ENCODE measurements at regions of chr14 and their contacts with region 1.

Region 1: GRCh38 chr14:22556990-22557623 is 31.9 kb downstream of the DAD1 start:
- DNase-seq: peak; percentile 94
- H3K4me3 Mint-ChIP-seq: peak overlapping the region; percentile 78
- H3K27ac Mint-ChIP-seq: peak overlapping the region; percentile 99
- H3K4me1 Mint-ChIP-seq: peaks cover 87% of the 10 kb centered on the region
- H3K27me3 Mint-ChIP-seq: peaks cover 4% of the 10 kb centered on the region

Region 2: DNA sequence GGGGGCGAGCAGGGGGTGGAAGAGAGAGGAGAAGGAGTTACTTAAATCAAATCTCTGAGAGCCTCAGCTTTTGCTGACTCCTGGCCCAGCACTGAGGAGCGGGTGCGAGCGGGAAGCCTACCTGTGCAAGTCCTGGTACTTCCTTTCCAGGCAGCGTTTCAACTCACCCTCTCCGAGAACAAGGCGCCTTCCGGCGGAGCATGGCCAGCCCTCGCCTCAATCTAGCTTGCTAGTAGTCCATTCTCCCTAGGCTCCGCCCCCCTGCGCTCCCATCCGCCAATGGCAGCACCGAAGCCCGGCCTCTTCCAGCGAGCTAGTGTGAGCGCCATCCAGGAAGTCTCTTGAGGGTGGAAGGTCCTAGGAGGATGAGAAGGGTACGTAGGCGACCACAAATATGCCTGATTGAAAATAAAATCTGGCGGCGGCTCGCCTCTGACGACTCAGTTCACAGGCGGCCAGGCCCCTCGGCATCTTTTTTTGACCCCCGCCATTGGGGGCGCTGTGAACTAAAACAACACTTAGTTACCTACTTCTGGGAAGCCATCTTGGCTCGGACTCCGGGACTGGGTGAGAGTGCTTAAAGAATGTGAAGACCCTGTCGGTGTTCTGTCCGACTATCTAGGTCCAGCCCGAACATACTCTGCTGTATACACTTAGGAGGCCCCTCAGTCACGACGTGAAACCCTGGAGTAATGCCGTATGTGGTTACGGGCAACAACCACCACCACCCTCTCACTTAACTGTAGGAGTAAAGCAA is 1101.0 kb before region 1 on chr14 and contains the start of gene CHD8:
- CTCF ChIA-PET with region 1: no interaction called
- POLR2A ChIA-PET with region 1: no interaction called
- intact Hi-C with region 1: loop called (anchors 10 kb)
- DNase-seq: peak; percentile 100
- H3K4me3 Mint-ChIP-seq: peak within 1 kb of the TSS; percentile 91
- H3K27ac Mint-ChIP-seq: peak within 1 kb of the TSS; percentile 98
- H3K4me1 Mint-ChIP-seq: peaks cover 31% of the 10 kb centered on the region
- H3K27me3 Mint-ChIP-seq: no peaks in the 10 kb centered on the region
- total RNA-seq, gene CHD8: 80.1 to 87.7 TPM

Region 3: DNA sequence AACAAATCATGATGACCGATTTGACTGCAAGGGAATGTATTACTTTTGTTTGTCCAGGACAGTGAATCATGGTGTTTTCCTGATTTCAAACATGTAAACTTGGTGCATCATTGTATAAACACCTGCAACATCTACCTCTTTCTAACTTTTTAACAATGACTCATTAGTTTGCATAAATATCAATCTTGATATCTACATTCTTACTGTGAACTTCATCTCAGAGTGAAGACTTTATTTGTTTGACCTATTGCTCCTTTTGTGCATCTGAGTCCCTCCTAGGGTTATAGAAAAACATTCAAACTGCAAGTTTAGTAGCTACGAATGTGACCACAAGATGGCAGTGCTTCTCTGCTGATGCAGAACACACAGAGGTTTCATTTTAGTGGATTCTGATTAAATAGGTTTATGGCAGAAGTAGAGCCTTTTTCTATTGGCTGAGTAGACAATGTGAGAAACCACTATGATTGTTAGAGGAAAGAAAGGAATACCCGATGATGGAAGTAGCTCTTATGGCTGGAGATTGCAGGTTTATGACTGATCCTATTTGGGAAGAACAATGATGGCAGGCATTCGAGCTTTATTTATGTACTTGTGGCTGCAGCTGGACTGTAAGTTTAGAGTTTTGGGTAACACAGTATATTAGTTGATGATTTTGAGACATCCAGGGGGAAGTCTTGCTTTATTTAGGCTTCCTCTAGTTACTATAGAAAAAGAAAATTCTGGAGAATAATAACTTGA is 639.2 kb before region 1 on chr14:
- CTCF ChIA-PET with region 1: interaction called, 16 read pairs
- POLR2A ChIA-PET with region 1: interaction called, 6 read pairs
- intact Hi-C with region 1: loop called (anchors 1 kb)
- DNase-seq: peak; percentile 61
- H3K4me3 Mint-ChIP-seq: peak overlapping the region; percentile 73
- H3K27ac Mint-ChIP-seq: peak overlapping the region; percentile 73
- H3K4me1 Mint-ChIP-seq: peaks cover 58% of the 10 kb centered on the region
- H3K27me3 Mint-ChIP-seq: no peaks in the 10 kb centered on the region

Region 4: DNA sequence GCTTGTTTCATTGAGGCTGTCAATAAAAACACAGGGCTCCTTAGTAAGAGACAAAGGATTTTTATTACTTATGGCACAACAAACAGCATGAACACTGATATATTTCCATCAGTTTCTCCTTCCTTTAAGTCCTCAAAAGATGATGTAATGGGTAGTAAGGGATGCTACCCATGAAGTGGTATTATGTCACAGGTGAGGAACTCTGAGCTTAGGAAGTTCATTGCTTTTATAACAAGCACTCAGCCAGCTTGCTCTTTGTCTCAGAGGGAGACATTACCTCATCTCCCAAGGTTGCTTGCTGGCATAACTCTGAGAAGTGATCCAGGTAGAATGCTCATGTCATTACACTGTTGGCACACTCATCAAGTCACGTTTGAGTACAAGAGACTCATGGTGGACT is 596.5 kb before region 1 on chr14:
- CTCF ChIA-PET with region 1: no interaction called
- POLR2A ChIA-PET with region 1: no interaction called
- intact Hi-C with region 1: no loop called
- DNase-seq: no peak
- H3K4me3 Mint-ChIP-seq: no peak overlapping the region
- H3K27ac Mint-ChIP-seq: no peak overlapping the region
- H3K4me1 Mint-ChIP-seq: peaks cover 17% of the 10 kb centered on the region
- H3K27me3 Mint-ChIP-seq: peaks cover 2% of the 10 kb centered on the region

Region 5: DNA sequence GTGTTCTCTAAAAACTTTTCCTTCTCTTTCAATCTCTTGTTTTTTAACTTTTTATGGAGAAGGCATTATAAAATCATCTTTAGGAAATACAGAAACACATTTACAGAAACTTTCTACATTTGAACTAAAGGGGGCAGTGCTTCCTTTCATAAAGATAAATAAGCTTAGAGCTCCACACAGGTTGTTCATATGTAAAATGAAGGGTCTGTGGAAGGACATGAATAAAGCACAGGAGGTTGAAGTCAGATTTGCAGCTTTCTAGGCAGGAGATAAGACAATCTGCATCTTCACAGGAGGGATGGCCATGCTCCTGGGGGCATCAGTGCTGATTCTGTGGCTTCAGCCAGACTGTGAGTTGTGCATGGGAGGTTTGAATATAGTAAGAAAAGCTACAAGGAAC is 394.1 kb before region 1 on chr14:
- CTCF ChIA-PET with region 1: no interaction called
- POLR2A ChIA-PET with region 1: no interaction called
- intact Hi-C with region 1: loop called (anchors 5 kb)
- DNase-seq: no peak
- H3K4me3 Mint-ChIP-seq: peak overlapping the region; percentile 70
- H3K27ac Mint-ChIP-seq: peak overlapping the region; percentile 81
- H3K4me1 Mint-ChIP-seq: peaks cover 10% of the 10 kb centered on the region
- H3K27me3 Mint-ChIP-seq: no peaks in the 10 kb centered on the region

Region 6: DNA sequence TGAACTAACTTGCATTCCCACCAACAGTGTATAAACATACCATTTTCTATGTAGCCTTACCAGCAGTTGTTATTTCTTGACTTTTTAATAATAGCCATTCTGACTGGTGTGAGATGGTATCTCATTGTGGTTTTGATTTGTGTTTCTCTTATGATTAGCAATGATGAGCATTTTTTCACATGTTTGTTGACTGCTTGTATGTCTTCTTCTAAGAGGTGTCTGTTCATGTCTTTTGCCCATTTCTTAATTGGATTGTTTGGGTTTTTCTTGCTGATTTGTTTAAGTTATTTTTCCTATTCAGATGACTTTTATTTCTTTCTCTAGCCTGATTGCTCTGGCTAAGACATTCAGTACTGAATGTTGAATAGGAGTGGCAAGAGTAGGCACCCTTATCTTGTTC is 198.4 kb before region 1 on chr14:
- CTCF ChIA-PET with region 1: no interaction called
- POLR2A ChIA-PET with region 1: no interaction called
- intact Hi-C with region 1: no loop called
- DNase-seq: no peak
- H3K4me3 Mint-ChIP-seq: no peak overlapping the region
- H3K27ac Mint-ChIP-seq: no peak overlapping the region
- H3K4me1 Mint-ChIP-seq: no peaks in the 10 kb centered on the region
- H3K27me3 Mint-ChIP-seq: no peaks in the 10 kb centered on the region

Region 7: DNA sequence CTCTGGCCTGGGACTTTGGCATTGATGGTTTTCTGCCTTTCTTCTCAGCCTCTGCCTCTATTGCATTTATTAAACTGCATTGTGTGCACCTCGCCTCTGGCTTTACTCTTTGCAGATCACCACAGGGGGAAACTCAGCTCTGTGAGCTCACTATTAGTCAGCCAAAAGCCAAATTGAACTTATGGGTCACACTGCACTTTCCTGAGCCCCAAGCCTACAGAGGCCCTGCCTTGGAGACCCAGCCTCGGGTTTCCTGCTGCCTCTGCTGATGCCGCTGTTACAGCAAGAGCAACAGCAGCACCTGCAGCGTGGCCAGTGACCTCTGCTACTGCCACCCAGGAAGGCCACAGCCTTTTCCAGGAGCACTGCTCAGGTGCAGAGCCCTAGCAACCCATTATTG is 90.6 kb before region 1 on chr14:
- CTCF ChIA-PET with region 1: no interaction called
- POLR2A ChIA-PET with region 1: no interaction called
- intact Hi-C with region 1: no loop called
- DNase-seq: no peak
- H3K4me3 Mint-ChIP-seq: no peak overlapping the region
- H3K27ac Mint-ChIP-seq: no peak overlapping the region
- H3K4me1 Mint-ChIP-seq: no peaks in the 10 kb centered on the region
- H3K27me3 Mint-ChIP-seq: no peaks in the 10 kb centered on the region

Region 8: DNA sequence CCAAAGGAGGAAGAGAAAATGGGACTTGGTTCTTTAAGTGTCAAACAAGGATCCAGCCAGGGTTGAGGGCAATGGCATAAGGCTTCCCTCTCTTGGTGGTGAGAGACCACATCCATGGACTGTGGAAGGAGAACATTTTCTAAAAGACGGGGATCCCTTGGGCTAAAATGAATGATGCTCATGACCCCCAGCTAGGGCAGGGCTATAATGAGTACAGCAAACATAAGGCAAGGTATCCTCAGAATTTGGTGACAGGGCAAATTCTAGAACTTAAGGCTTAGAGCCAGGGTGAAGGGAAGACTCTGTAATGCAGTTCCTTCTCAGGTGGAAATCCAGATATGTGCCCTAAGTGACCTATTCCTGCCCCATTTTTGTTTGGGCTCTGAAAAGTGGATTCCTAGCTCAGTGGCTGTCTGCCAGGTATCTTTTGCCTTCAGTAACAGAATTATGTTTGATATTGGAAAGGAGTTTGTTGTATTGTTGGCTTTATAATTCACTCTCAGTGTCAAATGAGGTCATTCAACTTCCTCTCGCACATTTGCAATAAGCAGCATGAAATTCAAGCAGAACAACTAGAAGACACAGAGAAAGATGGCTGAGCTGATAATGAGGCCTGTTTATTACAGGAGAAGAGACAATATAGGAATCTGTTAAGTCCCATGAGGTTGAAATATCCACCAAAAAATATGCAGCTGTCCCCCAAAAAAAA is 44.8 kb before region 1 on chr14:
- CTCF ChIA-PET with region 1: interaction called, 19 read pairs
- POLR2A ChIA-PET with region 1: interaction called, 71 read pairs
- intact Hi-C with region 1: loop called (anchors 1 kb)
- DNase-seq: no peak
- H3K4me3 Mint-ChIP-seq: peak overlapping the region; percentile 79
- H3K27ac Mint-ChIP-seq: peak overlapping the region; percentile 98
- H3K4me1 Mint-ChIP-seq: peaks cover 57% of the 10 kb centered on the region
- H3K27me3 Mint-ChIP-seq: no peaks in the 10 kb centered on the region

Region 9: GRCh38 chr14:22570132-22570949 is 13.2 kb after region 1 on chr14:
- CTCF ChIA-PET with region 1: interaction called, 273 read pairs
- POLR2A ChIA-PET with region 1: interaction called, 77 read pairs
- intact Hi-C with region 1: loop called (anchors 1 kb)
- DNase-seq: peak; percentile 91
- H3K4me3 Mint-ChIP-seq: peak overlapping the region; percentile 80
- H3K27ac Mint-ChIP-seq: peak overlapping the region; percentile 99
- H3K4me1 Mint-ChIP-seq: peaks cover 74% of the 10 kb centered on the region
- H3K27me3 Mint-ChIP-seq: no peaks in the 10 kb centered on the region

Region 10: DNA sequence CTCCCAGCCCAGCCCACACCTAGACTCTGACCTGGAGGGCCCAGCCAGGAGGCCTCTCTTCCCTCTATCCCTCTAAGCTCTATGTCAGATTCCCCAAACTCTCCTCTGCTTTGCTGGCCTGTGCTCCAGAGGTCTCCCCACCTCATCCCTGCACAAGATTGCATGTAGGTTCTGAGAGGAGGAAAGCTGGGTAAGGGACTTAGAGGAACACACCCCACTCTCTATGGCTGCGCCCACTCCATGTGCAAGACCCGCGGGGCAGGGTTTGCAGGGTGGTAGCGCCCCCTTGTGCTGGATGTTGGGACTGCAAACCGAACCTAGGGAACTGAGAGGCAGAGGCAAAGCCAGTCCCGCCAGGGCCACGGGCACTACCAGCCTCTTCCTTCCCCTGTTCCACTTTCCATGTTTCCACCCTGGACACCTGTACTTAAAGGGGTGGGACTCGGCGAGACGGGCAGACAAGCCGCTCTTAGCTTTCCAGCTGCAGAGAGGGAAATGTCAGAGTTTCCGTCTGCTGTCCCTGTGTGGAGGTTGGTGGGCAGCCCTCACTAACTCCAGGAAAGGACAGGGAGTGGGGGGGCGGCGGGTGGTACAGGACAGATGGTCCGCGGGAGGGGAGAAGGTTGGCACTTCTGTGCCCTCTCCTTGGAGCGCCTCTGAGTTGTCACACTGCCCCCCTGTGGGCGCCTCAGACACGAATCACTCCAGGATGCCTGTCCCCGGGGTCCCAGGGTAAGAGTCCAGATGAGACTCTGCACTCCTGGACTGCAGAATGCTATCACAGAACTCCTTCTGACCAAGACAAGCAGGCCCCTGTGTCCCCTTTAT is 296.0 kb after region 1 on chr14:
- CTCF ChIA-PET with region 1: interaction called, 23 read pairs
- POLR2A ChIA-PET with region 1: no interaction called
- intact Hi-C with region 1: loop called (anchors 1 kb)
- DNase-seq: peak; percentile 94
- H3K4me3 Mint-ChIP-seq: peak overlapping the region; percentile 72
- H3K27ac Mint-ChIP-seq: peak overlapping the region; percentile 73
- H3K4me1 Mint-ChIP-seq: peaks cover 32% of the 10 kb centered on the region
- H3K27me3 Mint-ChIP-seq: peaks cover 5% of the 10 kb centered on the region

Region 11: DNA sequence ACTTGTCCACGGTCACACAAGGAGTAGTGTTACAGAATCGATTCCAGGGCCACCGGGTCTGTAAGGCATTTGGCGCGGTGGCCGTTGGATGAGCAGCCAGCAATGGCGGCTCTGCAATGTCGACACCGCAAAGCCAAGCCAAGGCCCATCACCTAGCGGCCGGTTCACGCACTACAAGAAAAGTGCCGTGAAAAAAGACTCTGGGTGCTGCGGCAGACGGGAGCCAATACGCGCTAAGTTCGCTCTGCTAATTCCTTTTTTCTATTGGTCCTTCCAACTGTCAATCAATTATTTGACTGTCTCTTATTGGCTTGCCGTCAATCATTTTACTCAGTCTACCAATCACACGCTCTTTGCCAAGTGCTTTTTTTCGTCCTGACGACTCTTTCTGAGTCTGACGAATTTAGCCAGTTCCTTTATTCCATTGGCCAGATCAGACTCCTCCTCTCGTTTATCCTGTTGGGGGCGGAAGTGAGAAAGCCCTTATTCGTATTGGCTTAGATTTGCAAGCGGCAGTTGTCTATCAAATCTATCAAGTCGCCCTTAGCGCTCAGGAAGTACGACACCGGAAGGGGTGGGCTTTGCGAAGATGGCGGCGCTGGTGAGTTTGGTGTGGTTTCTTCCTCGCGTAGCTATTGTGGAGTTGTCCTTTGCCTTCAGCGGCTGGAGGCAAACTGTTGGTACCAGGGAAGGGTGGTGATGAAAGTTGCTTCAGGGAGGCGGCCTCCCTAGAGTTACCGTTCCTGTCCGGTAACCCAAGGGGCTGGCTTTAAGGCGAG is 912.2 kb after region 1 on chr14 and contains the start of gene NGDN:
- CTCF ChIA-PET with region 1: no interaction called
- POLR2A ChIA-PET with region 1: no interaction called
- intact Hi-C with region 1: no loop called
- DNase-seq: peak; percentile 95
- H3K4me3 Mint-ChIP-seq: no peak within 1 kb of the TSS
- H3K27ac Mint-ChIP-seq: no peak within 1 kb of the TSS
- H3K4me1 Mint-ChIP-seq: peaks cover 6% of the 10 kb centered on the region
- H3K27me3 Mint-ChIP-seq: no peaks in the 10 kb centered on the region
- total RNA-seq, gene NGDN: 42.1 to 44.1 TPM

Measured in activated CD4-positive, alpha-beta memory T cell treated with anti-CD3 and anti-CD28 coated beads for 36 hours (primary cell).